Posterior cingulate gyrus (tissue), 11 donors: ENCODE measurements at regions of chr16 and their contacts with region 1.

Region 1: DNA sequence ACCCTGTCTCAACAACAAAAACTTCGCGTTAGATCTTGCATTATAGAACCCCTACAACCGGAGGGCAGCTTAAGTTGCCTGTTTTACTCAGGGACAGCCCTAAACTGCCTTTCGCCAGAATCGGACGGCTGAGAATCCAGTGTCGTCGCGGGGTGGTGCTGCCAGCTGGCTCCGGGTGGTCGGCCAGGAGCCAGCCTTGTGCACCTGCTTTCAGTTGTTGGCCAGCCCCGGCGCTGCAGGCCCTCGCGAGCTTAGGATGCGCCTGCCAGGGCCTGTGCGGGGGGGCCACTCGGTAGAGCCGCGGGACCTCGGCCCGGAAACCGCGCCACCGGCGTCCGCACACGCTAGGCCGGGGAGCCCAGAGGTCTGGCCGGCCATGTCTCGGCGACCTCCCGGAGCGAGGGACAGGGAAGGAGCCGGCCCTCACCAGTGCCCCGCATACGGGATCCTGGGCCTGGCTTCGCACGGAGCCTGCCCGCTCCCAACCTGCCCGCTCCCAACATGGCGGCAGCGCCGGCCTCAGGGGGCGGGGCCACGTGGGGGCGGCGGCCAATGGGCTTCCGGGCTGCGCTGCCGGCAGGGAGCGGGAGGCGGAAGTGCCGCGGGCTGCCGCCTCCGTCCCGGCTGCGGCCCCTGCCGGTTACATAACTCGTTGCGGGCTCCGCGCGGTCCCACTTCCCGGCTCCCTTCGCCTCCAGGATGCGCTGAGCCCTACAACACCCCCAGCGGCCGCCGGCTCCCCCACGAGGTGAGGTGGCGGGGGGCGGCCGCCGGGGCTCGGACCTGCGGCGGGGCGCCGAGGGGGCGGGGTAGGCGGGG is 14.2 kb downstream of the NAA60 start:
- DNase-seq: peak; percentile 77 to 98 (median 87)

Region 2: GRCh38 chr16:3364774-3365427 is 92.7 kb before region 1 on chr16:
- intact Hi-C with region 1: loop called (anchors 1 kb)
- DNase-seq: peak; percentile 84 to 98 (median 89)

Region 3: DNA sequence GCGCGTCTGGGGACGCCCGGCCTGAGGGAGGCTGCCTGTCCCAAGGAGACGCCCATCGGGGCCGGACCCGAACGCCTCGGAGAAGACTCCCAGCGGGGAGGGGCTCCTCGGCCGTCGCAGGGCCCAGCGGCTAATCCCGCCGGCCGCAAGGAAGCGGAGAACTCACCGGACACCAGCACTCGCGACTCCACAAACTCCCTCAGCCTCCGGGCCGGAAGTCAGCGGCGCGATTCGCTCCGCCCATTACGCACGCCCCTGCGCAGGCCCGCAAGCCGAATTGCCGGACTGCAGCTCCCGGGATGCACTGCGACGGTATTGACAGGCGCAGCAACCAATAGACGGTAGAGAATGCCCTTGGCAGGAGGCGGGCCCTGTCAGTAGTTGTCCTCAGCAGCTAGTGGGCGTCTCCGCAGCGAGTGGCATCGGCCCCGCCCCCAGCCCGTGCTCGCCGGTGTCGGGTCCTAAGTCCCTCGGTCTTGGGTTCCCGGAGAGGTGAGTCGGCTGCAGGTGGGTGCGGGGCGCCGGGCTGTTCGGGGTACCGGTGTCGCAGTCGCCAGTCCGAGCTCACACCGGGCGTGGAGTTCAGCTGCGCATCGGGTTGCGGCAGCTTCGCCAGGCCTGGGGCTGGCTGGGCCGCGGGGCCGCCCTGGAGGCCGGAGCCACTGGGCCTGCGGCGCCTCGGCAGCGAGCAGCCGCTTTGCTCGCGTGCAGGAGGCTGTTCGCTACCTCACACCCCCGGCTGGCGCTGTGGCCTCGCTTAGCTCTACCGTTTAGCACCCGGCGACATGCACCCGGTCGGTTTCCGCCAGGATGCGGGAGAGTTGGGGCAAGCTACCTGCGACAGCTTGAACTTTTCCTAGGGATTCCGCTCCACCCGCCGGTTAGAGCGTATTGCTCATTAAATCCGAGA is 56.6 kb before region 1 on chr16 and contains the starts of genes ZNF174 and ZSCAN32:
- intact Hi-C with region 1: loop called (anchors 1 kb)
- DNase-seq: peak; percentile 98 to 100 (median 99)

Region 4: GRCh38 chr16:3503523-3503922 is 45.9 kb after region 1 on chr16:
- intact Hi-C with region 1: loop called (anchors 1 kb)
- DNase-seq: no peak